RWPE1 (cell line): ENCODE measurements at regions of chr17 and their contacts with region 1.

Region 1: DNA sequence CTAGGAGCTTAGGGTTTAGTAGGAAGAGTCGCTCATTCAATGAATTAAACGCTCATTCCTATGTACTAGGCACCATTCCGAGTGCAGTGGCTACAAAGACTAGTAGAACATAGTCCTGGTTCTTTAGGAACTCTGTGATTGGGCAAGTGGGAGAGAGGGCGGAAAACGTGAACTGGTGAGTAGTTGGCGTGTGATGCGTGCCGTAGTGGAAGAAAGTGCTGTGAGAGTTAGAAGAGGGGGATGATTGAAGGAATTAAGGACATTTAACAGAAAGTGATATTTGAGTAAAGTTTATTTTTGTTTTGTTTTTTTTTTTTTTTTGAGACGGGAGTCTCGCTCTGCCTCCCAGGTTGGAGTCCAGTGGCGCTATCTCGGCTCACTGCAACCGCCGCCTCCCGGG is 7.9 kb upstream of the SLFN14 start:
- DNase-seq: peak; percentile 61
- H3K27ac ChIP-seq: peak overlapping the region; percentile 77
- CTCF ChIP-seq: no peak

Region 2: GRCh38 chr17:35529866-35530265 is 38.7 kb before region 1 on chr17:
- CTCF ChIA-PET with region 1: no interaction called
- POLR2A ChIA-PET with region 1: no interaction called
- DNase-seq: no peak
- H3K27ac ChIP-seq: no peak overlapping the region
- CTCF ChIP-seq: no peak

Region 3: GRCh38 chr17:35540589-35541404 is 27.7 kb before region 1 on chr17:
- CTCF ChIA-PET with region 1: no interaction called
- POLR2A ChIA-PET with region 1: no interaction called
- DNase-seq: peak; percentile 54
- H3K27ac ChIP-seq: no peak overlapping the region
- CTCF ChIP-seq: no peak

Region 4: GRCh38 chr17:35555695-35556094 is 12.8 kb before region 1 on chr17:
- CTCF ChIA-PET with region 1: no interaction called
- POLR2A ChIA-PET with region 1: no interaction called
- DNase-seq: no peak
- H3K27ac ChIP-seq: no peak overlapping the region
- CTCF ChIP-seq: no peak

Region 5: DNA sequence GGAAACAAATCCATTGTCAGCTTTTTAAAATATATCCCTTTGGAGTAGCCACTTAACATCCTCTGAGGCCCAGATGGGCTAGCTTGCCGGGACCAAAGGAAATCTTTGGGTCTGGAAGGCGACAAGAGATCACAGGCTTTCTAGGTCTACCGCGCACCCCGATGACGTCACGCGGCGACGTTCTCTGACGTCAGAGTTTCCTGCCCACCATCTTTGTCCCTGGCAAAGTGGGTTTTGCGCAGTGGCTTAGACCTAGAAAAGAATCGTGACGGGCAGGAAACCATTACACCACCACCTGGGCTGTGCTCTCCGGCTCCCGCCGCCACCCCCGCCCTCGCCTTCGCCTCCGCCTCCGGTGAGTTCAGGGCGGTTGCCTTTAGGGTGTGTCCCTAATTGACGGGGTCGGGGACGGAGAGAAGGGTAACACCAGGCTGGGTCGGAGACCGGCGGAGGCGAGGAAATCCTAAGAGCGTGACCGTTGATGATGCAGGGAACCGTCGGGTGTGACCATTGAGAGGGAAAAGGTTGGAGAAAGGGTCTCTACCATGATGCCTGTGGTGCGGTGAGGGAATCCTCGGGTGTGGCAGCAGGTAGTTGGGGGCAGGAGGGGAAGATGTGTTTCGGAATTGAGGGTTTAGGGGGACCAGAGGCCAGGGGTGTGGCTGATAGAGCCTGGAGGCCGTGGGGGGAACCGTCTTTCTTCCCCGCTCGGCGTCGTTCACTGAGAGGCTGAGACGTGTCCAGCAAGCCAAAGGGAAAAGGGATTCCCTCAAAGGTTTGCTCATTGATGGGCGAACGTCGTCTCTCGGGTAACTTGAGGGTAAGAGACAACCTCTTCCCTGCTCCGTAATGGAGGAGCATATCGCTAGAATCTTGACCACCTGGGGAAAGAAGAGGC is 18.8 kb after region 1 on chr17 and contains the start of gene AP2B1:
- CTCF ChIA-PET with region 1: no interaction called
- POLR2A ChIA-PET with region 1: interaction called, 16 read pairs
- DNase-seq: peak; percentile 90
- H3K27ac ChIP-seq: peak within 1 kb of the TSS; percentile 97
- CTCF ChIP-seq: no peak